GM10248 (cell line): ENCODE measurements at regions of chr6 and their contacts with region 1.

Region 1: GRCh38 chr6:150417899-150418826 is 49.4 kb downstream of the IYD start:
- DNase-seq: peak; percentile 72
- CTCF ChIP-seq: peak; percentile 83

Region 2: GRCh38 chr6:150606647-150607328 is 188.6 kb after region 1 on chr6:
- CTCF ChIA-PET with region 1: no interaction called
- POLR2A ChIA-PET with region 1: no interaction called
- DNase-seq: no peak
- CTCF ChIP-seq: no peak

Region 3: DNA sequence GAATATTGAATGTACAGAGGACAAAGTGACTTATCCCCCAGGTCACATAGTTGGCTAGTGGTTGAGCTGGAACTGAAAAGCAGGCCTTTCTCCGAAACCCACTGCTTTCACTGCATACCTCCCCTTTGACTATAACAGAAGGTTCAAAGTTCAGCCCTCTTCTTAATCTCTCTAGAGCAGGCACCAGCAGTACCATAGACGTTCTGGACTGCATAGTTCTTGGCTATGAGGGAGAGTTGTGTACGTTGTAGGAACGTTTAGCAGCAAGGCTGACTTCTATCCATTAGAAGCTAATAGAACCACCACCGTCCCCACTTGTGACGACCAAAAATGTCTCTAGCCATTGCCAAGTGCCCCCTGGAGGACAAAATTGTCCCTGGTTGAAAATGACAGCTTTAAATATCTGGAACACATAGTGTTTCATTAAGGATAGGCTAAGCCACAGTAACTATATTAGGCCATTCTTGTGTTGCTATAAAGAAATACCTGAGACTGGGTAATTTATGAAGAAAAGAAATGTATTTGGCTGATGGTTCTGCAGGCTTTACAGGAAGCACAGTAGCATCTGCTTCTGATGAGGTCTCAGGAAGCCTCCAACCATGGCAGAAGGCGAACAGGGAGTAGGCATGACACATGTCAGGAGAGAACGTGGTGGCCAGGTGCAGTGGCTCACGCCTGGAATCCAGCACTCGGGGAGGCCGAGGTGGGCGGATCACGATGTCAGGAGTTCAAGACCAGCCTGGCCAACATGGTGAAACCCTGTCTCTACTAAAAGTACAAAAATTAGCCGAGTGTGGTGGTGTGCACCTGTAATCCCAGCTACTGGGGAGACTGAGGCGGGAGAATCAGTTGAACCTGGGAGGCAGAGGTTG is 323.7 kb after region 1 on chr6:
- CTCF ChIA-PET with region 1: interaction called, 24 read pairs
- POLR2A ChIA-PET with region 1: no interaction called
- DNase-seq: peak; percentile 32
- CTCF ChIP-seq: peak; percentile 45